Activated CD4-positive, alpha-beta T cell treated with anti-CD3 and anti-CD28 coated beads, Interleukin-2, amount 10 ng/mL, durations not matched to agents 24 days and 14 days (primary cell): ENCODE measurements at regions of chr10 and their contacts with region 1.

Region 1: GRCh38 chr10:95561182-95562075 is at the start of gene SORBS1:
- DNase-seq: peak; percentile 97
- H3K4me3 Mint-ChIP-seq: peak within 1 kb of the TSS; percentile 88
- H3K27ac Mint-ChIP-seq: peak within 1 kb of the TSS; percentile 67
- H3K4me1 Mint-ChIP-seq: peaks cover 14% of the 10 kb centered on the region
- H3K27me3 Mint-ChIP-seq: peaks cover 56% of the 10 kb centered on the region
- total RNA-seq, gene SORBS1: 0.66 and 0.77 TPM in 2 replicates

Region 2: DNA sequence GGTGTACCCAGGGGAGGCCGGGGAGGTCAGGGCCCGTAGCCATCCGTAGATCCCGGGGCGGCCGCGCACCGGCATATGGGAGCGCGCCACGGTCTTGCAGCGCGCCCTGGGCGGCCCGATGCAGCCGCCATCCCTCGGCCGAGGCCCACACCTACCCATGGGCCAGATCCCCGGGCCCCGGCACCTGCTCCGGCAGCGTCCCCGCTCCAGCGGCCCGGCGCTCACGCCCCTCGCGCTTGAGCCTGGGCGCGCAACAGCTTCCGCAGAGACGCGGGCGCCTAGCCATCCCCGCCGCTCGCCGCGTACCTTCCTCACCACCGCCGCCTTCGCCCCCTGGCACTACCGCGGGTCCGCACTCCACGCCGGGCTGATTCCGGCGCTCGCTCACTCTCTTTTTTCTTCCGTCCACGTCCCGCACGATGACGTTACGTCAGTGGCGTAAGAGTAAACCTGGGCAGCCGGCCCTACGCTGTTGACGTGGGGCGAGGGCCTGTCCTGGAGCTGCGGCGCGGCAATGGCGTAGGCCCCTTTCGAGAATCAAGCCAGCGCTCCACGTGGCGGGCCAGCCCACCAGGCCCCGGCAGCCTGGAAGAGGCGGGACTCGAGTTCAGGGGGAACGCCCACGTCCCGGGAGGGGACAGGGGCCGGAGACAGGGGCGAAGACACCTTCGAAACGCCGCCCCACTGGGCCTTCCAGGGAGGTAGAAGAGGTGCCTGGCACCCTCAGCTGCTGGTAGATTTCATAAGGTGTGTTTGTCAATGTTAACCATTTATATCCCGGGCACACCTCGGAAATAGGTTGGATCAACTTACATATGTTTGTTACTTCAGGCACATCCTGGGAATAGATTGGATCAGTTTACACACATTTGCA is 95.1 kb after region 1 on chr10 and contains the start of gene ALDH18A1:
- intact Hi-C with region 1: loop called (anchors 2 kb)
- DNase-seq: peak; percentile 98
- H3K4me3 Mint-ChIP-seq: peak within 1 kb of the TSS; percentile 98
- H3K27ac Mint-ChIP-seq: peak within 1 kb of the TSS; percentile 97
- H3K4me1 Mint-ChIP-seq: peaks cover 24% of the 10 kb centered on the region
- H3K27me3 Mint-ChIP-seq: no peaks in the 10 kb centered on the region
- total RNA-seq, gene ALDH18A1: 126 TPM in 2 replicates